Activated CD4-positive, alpha-beta T cell treated with anti-CD3 and anti-CD28 coated beads for 36 hours (primary cell): ENCODE measurements at regions of chr10 and their contacts with region 1.

Region 1: DNA sequence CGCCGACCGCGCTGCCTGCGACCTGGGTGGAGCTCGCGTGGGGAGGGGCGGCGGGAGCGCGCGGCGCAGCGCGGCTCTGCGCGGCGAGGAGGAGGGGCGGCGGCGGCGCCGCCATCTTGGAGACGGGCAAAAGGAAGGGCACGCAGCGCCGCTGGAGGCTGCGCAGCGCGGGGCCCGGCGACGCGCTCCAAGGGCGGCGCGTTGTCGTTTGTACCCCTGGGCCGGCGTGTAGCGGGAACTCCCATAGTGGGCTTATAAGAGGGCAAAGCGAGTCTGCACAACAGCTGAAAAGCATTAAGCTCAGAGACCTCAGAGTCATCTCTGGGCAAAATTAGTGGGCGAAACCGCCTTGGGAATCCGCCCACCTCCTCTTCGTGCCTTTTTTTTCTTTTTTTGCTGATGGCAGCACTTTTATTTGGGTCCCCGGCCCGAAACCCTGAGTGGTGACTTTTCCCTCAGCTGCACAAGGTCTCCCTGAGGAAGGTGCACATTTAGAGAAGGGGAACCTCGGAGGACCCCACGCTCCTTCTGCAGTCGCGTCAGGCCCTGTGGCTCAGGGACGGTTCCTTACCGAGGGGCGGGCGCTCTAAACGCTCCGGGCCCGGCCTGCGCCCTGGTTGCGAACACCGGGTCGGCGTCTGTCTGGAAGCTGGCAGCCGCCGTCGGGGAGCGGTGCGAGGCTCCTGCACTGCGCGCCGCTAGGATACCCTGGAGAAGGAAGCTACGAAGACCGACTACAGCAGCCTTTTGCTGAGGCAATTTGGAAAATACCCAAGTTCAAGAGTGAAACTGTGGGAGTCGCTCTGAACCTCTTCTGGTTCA is 428 bp upstream of the MCMBP start:
- DNase-seq: peak; percentile 94
- ATAC-seq: peak; percentile 95
- H3K4me3 Mint-ChIP-seq: peak overlapping the region; percentile 79
- H3K27ac Mint-ChIP-seq: peak overlapping the region; percentile 87
- H3K4me1 Mint-ChIP-seq: peaks cover 33% of the 10 kb centered on the region
- H3K27me3 Mint-ChIP-seq: no peaks in the 10 kb centered on the region

Region 2: DNA sequence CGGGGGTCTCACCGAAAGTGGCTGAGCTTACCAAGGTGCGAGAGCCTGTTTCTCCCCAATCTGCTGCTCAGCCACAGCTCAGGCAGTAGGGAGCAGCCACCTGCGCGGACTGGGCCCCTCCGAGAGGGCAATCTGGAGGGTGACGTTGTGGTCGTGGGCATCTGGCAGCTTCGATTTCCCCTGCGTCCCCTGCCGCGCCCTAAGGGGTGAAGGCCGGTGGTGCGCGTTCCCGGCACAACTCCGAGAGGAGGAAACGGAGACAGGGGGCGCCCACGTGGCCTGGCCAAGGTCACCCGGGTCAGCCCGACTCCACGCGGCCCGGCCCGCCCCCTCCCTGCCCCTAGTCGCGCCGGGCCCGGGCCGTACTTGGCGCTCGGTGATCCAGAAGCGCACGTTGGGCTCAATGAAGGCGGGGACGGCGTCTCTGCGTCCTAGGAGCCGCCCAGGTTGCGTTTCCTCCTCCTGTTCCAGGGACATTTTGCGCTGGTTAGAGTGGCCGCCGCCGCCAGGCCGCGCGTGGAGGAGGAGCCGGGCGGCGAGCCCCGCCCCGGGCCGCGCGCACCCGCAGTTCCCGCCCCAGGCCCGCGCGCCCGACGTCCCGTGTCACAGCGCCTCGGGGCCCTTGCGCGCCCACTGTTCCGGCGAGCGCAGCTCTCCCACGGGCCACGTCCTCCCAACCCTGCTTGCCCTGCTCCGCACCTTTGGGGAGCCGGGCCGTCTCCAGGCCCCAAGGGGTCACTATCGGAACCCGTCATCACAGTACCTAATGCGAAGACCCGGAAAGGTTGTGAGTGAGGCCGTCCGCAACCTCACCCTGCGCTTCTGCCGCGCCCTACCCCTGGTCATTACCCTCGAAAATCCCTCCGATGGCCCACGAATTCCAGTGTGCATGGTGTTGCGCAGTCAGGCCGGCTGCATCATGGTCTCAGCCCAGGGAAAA is 707.6 kb before region 1 on chr10 and contains the start of gene SFXN4:
- CTCF ChIA-PET with region 1: no interaction called
- POLR2A ChIA-PET with region 1: no interaction called
- intact Hi-C with region 1: loop called in 1 of 2 experiments (anchors 1 kb)
- DNase-seq: peak; percentile 87
- ATAC-seq: peak; percentile 94
- H3K4me3 Mint-ChIP-seq: peak within 1 kb of the TSS; percentile 86
- H3K27ac Mint-ChIP-seq: peak within 1 kb of the TSS; percentile 94
- H3K4me1 Mint-ChIP-seq: peaks cover 40% of the 10 kb centered on the region
- H3K27me3 Mint-ChIP-seq: no peaks in the 10 kb centered on the region
- total RNA-seq, gene SFXN4: 38.7 to 44.7 TPM

Region 3: DNA sequence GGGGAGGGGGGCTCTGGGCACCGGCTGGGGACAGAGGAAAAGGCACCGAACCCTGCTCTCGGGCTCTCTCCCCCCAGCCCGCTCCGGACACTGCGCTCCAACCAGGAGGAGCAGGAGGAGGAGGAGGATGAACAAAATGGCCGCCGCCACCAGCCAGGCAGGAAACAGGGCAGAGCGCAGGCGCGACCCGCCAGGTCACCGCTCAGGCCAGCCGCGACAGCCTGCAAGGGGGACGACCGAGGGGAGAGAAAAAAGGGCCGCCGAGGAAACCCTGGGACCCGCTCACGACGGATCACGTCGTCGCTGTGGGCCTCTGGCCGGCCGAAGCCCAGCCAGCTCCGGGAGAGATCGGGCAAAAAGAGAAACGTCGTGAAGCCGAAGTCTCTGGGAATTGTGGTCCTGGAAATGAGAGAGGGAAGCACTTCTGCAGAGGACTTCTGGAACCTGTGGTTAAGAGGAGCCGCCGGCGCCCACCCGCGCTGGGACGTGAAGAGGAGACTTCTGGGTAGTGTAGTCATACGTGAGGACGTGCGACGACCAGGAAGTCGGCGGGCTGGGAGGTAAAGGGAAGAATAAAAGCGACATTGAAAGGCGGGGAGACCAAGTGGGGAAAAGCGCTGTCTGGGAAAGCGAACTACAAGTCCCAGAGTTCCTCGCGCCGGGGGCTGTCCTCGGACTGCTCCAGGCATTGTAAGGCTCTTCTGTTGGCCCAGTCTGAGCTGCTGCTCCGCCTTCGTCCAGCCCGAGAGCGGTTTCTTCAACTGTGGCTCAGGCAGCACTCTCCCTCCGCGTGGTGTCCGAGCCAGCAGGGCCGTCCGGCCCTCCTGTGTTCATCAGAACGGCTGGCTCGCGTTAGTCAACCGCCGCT is 276.3 kb before region 1 on chr10 and contains the start of gene TIAL1:
- CTCF ChIA-PET with region 1: interaction called, 3 read pairs
- POLR2A ChIA-PET with region 1: interaction called, 3 read pairs
- intact Hi-C with region 1: loop called (anchors 1 to 2 kb)
- DNase-seq: peak; percentile 96
- ATAC-seq: peak; percentile 90
- H3K4me3 Mint-ChIP-seq: peak within 1 kb of the TSS; percentile 92
- H3K27ac Mint-ChIP-seq: peak within 1 kb of the TSS; percentile 93
- H3K4me1 Mint-ChIP-seq: peaks cover 49% of the 10 kb centered on the region
- H3K27me3 Mint-ChIP-seq: no peaks in the 10 kb centered on the region
- total RNA-seq, gene TIAL1: 187 to 197 TPM

Region 4: DNA sequence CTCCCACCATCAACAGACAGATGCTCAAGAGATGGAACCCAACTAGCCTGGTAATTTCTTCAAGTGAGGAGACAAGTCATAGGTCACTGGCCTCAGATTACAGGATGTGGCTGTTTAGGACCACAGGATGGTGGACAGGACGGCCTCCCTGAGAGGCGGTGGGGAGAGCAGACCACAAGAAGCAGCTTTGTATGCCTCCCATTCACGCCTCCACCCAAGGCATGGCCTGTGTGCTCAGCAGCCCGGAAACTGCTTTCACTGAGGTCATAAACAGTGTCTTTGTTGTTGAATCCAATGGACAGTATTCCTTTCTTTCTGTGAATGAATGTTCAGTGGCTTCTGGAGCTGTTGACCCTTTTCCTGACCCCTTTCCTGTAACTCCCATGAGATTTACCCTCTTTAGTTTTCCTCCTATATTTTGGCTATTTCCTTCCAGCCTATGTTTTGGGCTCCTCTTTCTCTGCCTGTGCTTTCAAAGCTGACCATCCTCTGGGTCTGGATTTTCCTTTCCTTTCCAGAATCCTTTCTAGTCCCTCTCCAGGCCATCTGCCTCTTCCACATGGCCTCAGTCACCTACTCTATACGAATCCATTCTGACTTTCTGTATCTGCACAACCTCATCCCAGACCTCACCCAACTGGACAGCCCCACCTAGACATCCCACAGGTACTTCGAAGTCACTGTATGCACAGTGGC is 179.7 kb before region 1 on chr10:
- CTCF ChIA-PET with region 1: no interaction called
- POLR2A ChIA-PET with region 1: interaction called, 10 read pairs
- intact Hi-C with region 1: no loop called
- DNase-seq: no peak
- ATAC-seq: no peak
- H3K4me3 Mint-ChIP-seq: no peak overlapping the region
- H3K27ac Mint-ChIP-seq: no peak overlapping the region
- H3K4me1 Mint-ChIP-seq: no peaks in the 10 kb centered on the region
- H3K27me3 Mint-ChIP-seq: no peaks in the 10 kb centered on the region

Region 5: GRCh38 chr10:119725828-119726675 is 147.0 kb before region 1 on chr10 and contains the start of gene INPP5F:
- CTCF ChIA-PET with region 1: no interaction called
- POLR2A ChIA-PET with region 1: interaction called, 7 read pairs
- intact Hi-C with region 1: loop called in 1 of 2 experiments (anchors 1 kb)
- DNase-seq: peak; percentile 100
- ATAC-seq: peak; percentile 95
- H3K4me3 Mint-ChIP-seq: peak within 1 kb of the TSS; percentile 86
- H3K27ac Mint-ChIP-seq: peak within 1 kb of the TSS; percentile 73
- H3K4me1 Mint-ChIP-seq: peaks cover 47% of the 10 kb centered on the region
- H3K27me3 Mint-ChIP-seq: no peaks in the 10 kb centered on the region
- total RNA-seq, gene INPP5F: 10.9 to 12.6 TPM

Region 6: GRCh38 chr10:119834188-119834587 is 38.9 kb before region 1 on chr10:
- CTCF ChIA-PET with region 1: no interaction called
- POLR2A ChIA-PET with region 1: no interaction called
- intact Hi-C with region 1: loop called (anchors 1 to 5 kb)
- DNase-seq: peak; percentile 35
- ATAC-seq: peak; percentile 80
- H3K4me3 Mint-ChIP-seq: no peak overlapping the region
- H3K27ac Mint-ChIP-seq: peak overlapping the region; percentile 83
- H3K4me1 Mint-ChIP-seq: peaks cover 38% of the 10 kb centered on the region
- H3K27me3 Mint-ChIP-seq: no peaks in the 10 kb centered on the region

Region 7: DNA sequence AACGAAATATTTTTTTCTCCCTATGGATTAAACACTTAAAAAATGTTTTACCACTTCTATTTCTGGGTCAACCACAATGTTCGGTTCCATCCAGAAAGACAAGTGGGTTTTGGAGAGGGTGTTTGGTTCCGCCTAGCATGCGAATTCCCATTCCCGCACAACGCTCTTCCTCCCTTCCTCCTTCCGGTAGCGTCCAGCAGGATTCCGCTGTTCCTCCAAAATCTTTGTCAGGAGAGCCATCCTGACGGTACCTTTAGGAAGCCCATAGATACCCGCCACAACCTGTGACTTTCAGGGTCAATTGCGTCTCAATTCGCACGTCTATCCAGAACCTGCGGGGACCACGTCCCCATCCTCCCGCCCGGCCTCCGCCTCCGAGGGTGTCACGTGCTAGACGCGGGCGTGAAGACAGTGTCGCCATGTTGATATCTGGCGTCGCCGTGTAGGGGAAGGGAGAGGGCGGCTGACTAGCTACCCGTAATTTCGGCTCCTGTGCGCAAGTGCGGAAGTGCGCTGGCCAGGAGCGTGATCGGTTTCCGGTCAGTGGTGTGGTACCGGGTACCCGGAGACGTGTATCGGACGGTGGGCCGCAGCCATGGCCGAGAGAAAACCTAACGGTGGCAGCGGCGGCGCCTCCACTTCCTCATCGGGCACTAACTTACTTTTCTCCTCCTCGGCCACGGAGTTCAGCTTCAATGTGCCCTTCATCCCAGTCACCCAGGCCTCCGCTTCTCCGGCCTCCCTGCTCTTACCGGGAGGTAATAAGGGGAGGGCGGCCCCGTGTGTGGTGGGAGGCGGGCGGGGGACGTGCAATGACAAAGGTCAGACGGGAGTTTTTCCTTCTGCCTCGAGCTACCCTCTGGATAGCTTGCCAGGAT is 19.4 kb after region 1 on chr10 and contains the start of gene SEC23IP:
- CTCF ChIA-PET with region 1: interaction called, 10 read pairs
- POLR2A ChIA-PET with region 1: interaction called, 15 read pairs
- intact Hi-C with region 1: loop called (anchors 1 kb)
- DNase-seq: peak; percentile 96
- ATAC-seq: peak; percentile 100
- H3K4me3 Mint-ChIP-seq: peak within 1 kb of the TSS; percentile 84
- H3K27ac Mint-ChIP-seq: peak within 1 kb of the TSS; percentile 95
- H3K4me1 Mint-ChIP-seq: peaks cover 43% of the 10 kb centered on the region
- H3K27me3 Mint-ChIP-seq: no peaks in the 10 kb centered on the region
- total RNA-seq, gene SEC23IP: 70.3 to 87.2 TPM